ENCODE measurements at regions of chr20 and their contacts with region 1.

Region 1: DNA sequence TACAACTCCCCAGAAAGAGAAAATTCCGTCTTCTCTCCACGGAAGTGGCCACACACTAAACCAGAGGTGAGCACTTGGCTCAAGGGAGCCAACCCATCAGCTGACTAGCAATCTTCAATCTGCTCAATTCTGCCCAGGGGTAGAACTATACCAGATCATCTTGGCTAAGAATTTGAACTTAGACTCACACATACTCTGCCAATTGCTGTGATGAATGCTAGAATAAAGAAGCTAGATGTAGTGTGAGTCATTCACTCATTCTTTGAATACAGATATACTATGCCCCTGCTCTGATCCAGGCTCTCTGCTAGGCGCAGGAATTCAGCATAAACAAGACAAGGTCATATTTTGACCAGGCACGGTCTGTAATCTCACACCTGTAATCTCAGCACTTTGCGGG is 147.9 kb upstream of the SHLD1 start:
- DNase-seq: no peak
- H3K4me3 ChIP-seq: peak overlapping the region; percentile 37
- H3K27ac ChIP-seq: peak overlapping the region; percentile 94
- H3K4me1 ChIP-seq: peaks cover 99% of the 10 kb centered on the region
- CTCF ChIP-seq: no peak

Region 2: DNA sequence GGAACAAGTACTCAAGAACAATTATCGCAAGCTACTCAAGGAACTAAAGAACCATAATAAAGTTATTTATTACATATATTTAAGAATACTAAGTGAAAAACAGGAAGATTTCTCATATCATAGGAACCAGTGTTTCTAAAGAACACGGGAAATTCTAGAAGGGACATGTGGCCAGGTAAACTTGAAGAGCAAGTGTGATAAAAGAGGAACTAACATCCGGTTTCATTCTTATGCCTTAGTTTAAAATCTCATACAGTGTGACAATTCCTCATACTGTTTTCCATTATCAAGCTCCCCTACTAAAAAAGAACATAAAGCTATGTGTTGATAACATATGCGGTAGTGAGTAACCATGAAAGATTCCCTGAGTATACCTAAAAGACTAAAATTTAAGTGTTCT is 15.6 kb before region 1 on chr20:
- CTCF ChIA-PET with region 1: interaction called, 20 read pairs
- POLR2A ChIA-PET with region 1: interaction called, 26 read pairs
- intact Hi-C with region 1: no loop called
- DNase-seq: peak; percentile 48
- H3K4me3 ChIP-seq: peak overlapping the region; percentile 18
- H3K27ac ChIP-seq: peak overlapping the region; percentile 97
- H3K4me1 ChIP-seq: peaks cover 83% of the 10 kb centered on the region
- CTCF ChIP-seq: no peak

Region 3: GRCh38 chr20:5633751-5634365 is 31.5 kb after region 1 on chr20:
- CTCF ChIA-PET with region 1: no interaction called
- POLR2A ChIA-PET with region 1: no interaction called
- intact Hi-C with region 1: no loop called
- DNase-seq: no peak
- H3K4me3 ChIP-seq: no peak overlapping the region
- H3K27ac ChIP-seq: no peak overlapping the region
- H3K4me1 ChIP-seq: peaks cover 15% of the 10 kb centered on the region
- CTCF ChIP-seq: no peak

Region 4: DNA sequence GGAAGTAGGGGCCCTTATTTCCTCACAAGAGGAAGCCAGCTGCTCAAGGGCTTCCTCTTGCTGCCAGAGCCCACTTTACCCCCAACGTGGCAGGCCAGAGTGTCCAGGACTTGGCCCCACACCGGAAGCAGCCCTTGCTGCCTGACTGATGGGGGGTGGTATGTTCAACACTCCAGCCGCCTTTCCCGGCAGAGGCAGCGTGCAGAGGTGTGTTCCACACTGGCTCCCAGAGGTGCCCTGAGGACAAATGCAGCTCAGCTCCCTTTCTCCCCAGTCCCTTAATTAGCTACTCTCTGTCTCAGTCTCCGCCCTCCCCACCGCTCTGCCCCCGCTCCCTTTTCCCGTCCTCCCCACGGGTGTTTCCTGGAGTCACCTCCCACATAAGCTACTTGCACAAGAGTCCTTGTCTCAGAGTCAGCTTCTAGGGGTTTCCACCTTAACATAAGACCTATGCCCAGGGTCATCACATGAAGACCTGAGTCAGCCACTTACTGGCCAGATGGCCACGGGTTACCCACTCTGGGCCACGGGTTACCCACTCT is 86.2 kb after region 1 on chr20:
- CTCF ChIA-PET with region 1: no interaction called
- POLR2A ChIA-PET with region 1: no interaction called
- intact Hi-C with region 1: no loop called
- DNase-seq: no peak
- H3K4me3 ChIP-seq: no peak overlapping the region
- H3K27ac ChIP-seq: no peak overlapping the region
- H3K4me1 ChIP-seq: peaks cover 61% of the 10 kb centered on the region
- CTCF ChIP-seq: no peak

Measured in OCI-LY7 (cell line).